ENCODE measurements at regions of chr7 and their contacts with region 1.

Region 1: DNA sequence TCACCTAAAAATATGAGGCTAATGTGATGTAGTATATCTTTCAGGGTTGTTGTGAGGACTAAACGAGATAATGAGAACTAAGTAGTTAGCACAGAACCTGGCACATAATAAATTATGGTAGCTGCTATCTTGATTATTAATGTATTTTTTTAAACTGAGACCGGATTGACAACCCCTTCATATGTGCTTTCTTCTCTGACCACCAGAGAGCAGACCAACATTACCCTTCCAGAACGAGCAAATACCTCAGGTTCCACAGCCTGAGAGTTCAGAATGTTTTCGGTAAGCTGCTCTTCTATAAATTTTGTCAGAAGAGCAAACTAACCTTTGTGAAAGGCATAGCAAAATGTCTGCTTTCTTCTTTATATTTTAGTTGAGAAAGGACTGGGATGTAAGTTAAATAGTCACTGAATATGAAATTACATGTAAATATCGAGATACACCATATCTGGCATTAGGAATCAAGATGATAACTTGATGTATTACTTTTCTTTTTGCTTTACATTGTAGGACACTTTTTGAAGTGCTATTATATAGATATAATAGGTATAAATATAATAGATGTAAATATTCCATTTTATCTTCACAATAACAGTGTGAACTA is 13.6 kb upstream of the BPGM start:
- DNase-seq: peak; percentile 44
- H3K4me3 Mint-ChIP-seq: no peak overlapping the region
- H3K27ac Mint-ChIP-seq: no peak overlapping the region
- H3K4me1 Mint-ChIP-seq: peaks cover 29% of the 10 kb centered on the region
- H3K27me3 Mint-ChIP-seq: peaks cover 10% of the 10 kb centered on the region

Region 2: DNA sequence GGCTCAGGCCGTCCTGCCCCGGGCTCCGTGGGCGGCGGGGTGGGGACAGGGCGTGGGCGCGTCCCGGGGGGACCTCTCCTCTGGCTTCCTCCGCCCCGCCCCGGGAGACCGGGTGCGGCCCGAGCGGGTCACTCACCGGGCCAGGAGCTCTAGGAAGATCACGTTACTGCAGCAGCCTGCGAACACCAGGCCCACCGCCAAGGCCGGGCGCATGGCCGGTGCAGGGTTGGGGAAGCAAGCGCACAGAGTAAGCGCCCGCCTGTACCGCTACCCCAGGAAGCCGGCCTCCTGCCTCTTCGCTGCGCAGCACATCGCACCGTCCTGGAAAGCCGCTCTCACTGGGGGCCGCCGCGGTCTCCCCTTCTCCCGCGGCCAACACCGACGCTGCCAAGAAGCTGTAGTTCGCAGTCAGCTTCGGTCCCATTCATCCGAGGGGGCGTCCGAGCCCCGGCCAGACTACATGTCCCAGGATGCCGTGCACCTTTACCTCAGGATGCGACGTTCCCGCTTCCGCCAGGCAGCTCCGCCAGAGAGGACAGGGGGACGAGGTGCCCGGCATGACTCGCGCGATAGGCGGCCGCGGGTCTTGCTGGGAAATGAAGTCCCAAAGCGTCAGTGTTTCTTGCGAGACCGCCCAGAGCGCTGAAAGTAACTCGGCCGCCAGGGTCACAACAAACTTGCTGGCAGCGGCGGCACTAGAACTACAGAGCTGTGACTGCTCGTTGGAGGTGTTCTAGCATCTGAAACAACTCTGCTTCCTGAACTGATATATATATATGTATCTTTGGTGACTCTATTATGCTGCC is 316.3 kb before region 1 on chr7 and contains the start of gene SLC35B4:
- CTCF ChIA-PET with region 1: no interaction called
- DNase-seq: peak; percentile 98
- H3K4me3 Mint-ChIP-seq: peak within 1 kb of the TSS; percentile 89
- H3K27ac Mint-ChIP-seq: peak within 1 kb of the TSS; percentile 85
- H3K4me1 Mint-ChIP-seq: peaks cover 19% of the 10 kb centered on the region
- H3K27me3 Mint-ChIP-seq: peaks cover 6% of the 10 kb centered on the region

Region 3: GRCh38 chr7:134548877-134549276 is 84.2 kb before region 1 on chr7 and contains the start of gene AKR1B15:
- CTCF ChIA-PET with region 1: no interaction called
- DNase-seq: no peak
- H3K4me3 Mint-ChIP-seq: no peak within 1 kb of the TSS
- H3K27ac Mint-ChIP-seq: no peak within 1 kb of the TSS
- H3K4me1 Mint-ChIP-seq: peaks cover 5% of the 10 kb centered on the region
- H3K27me3 Mint-ChIP-seq: peaks cover 17% of the 10 kb centered on the region

Region 4: DNA sequence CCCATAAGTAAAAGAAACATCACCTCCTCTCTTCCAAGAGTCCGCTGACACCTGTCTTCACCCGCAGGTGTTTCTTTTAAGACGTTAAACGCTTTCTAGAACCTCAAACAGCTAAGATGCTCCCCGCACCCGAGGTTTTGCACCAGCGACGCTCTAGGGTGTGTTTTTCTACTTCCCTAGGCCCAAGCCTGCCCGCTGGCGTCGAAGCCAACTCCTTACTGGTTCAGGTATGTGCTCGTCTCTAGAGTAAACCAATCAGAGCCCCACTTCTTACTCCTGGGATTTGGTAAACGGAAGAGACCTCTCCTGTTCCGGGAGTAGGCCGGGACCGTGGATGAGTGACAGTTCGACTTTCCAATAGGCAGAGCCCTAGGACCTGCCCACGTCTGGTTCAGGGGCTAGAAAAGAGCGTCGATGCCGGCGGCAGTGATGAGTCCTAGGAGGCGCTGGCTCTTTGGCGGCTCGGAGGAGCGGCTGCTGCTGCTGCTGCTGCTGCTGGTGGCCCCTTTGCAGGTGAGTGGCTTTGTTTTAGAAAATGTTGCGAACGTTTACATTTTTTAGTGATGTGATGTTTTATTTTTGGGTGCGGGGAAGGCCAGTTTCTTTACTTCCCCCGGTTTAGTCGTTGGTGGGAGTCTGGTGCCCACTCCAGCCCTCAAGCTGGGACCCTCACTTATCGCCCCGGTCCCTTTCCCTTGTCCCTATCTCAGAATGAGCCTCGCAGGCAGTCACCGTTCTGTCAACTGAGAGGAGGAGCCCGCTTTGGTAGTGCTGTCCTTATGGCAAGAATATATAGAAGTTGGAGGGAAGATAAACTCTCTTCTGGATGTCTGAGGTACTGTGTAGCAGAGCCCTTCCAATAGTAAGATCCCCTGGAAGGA is 13.6 kb after region 1 on chr7 and contains the start of gene BPGM:
- CTCF ChIA-PET with region 1: interaction called, 31 read pairs
- DNase-seq: peak; percentile 98
- H3K4me3 Mint-ChIP-seq: no peak within 1 kb of the TSS
- H3K27ac Mint-ChIP-seq: no peak within 1 kb of the TSS
- H3K4me1 Mint-ChIP-seq: peaks cover 35% of the 10 kb centered on the region
- H3K27me3 Mint-ChIP-seq: no peaks in the 10 kb centered on the region

Region 5: DNA sequence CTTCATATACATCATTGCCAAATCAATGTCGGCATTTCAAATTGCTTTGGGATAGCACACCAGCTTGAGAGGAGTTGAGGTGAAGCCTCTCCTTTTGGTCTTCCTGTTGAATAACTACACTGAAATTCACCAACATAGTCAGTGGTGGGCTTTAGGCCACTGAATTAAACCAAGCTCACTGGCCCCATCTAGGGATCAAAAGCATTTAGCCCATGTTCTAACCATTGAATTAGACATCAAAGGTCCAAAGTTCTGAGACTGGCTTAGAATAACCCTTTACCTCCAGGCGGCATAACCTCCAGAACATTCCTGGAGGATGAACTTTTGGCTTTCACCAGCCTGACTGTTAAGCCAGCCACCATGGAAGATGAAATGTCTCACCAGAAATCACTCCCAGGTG is 68.2 kb after region 1 on chr7:
- CTCF ChIA-PET with region 1: interaction called, 31 read pairs
- DNase-seq: no peak
- H3K4me3 Mint-ChIP-seq: no peak overlapping the region
- H3K27ac Mint-ChIP-seq: no peak overlapping the region
- H3K4me1 Mint-ChIP-seq: no peaks in the 10 kb centered on the region
- H3K27me3 Mint-ChIP-seq: peaks cover 7% of the 10 kb centered on the region

Region 6: DNA sequence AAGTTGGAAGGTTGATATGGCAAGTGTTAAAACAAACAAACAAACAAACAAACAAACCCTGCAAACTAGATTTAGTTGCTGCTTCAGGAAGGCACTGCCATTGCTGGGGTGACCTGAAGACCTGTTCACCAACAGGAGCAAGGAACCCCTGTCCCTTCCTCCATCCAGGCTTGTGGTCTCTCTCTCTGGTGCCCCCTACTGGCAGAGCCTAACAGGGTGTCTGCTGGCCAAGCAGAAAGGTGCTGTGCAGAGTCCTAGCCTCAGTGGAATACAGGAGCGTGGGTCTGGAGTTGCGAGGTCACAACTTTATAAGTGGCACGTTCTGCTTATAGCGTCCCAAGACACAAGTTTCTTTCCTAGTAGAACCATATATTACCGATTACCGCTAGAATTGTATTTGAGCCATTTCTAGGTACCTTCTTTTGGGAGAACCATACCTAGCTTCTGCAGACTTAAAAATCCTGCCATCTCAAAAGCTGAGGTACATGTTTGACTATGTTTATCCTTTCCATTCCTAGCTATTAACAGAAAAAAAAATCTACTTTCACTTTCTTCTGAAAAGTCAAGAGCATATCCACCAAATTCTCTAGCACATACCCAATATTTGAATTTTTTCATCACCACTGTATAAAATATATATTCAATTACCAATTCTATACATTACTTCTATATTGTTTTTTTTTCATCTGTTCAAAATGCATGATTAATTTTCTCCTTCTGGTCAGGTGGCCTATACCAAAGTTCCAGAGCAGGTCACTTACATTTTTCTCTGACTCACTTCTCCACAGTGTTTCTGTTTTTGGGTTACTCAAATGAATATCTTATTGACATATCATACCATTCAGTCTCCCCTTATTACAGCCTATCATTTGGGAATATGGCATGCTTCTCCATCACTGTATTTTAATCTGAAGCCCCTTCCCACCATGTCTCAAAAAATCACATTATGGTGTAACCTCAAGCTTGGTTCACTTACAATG is 117.3 kb after region 1 on chr7:
- CTCF ChIA-PET with region 1: interaction called, 32 read pairs
- DNase-seq: peak; percentile 76
- H3K4me3 Mint-ChIP-seq: no peak overlapping the region
- H3K27ac Mint-ChIP-seq: no peak overlapping the region
- H3K4me1 Mint-ChIP-seq: no peaks in the 10 kb centered on the region
- H3K27me3 Mint-ChIP-seq: no peaks in the 10 kb centered on the region

Region 7: DNA sequence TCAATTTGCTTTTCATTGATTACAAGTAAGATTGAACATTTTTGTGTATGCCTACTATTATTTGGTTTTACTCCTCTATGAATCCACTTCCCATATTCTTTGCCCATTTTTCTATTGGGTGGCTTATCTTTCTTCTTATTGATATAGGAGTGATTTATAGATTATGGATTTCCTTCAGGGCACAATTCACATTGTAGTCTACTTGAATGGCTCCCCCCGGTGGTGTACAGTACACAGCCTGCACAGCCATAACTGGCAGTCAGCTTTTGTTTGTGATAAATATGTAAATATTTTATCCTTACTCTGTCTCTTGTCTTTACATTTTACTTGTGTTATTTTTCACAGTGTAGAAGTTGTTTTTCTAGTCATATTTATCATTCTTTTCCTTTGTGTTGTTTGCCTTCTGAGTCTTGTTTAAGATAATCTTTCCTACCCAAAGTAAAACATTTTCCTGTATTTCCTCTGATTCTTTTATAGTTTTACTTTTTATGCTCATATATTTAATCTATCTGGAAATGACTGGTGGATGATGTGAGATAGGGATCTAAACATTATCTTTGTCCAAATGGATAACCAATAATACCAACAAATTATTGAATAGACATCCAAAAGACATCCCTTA is 122.5 kb after region 1 on chr7:
- CTCF ChIA-PET with region 1: interaction called, 32 read pairs
- DNase-seq: peak; percentile 66
- H3K4me3 Mint-ChIP-seq: no peak overlapping the region
- H3K27ac Mint-ChIP-seq: no peak overlapping the region
- H3K4me1 Mint-ChIP-seq: peaks cover 3% of the 10 kb centered on the region
- H3K27me3 Mint-ChIP-seq: no peaks in the 10 kb centered on the region

Region 8: GRCh38 chr7:134943764-134944400 is 310.8 kb after region 1 on chr7:
- CTCF ChIA-PET with region 1: interaction called, 21 read pairs
- DNase-seq: no peak
- H3K4me3 Mint-ChIP-seq: no peak overlapping the region
- H3K27ac Mint-ChIP-seq: no peak overlapping the region
- H3K4me1 Mint-ChIP-seq: peaks cover 17% of the 10 kb centered on the region
- H3K27me3 Mint-ChIP-seq: peaks cover 4% of the 10 kb centered on the region

Measured in activated naive CD4-positive, alpha-beta T cell treated with anti-CD3 and anti-CD28 coated beads, Interleukin-2, amount 10 ng/mL, durations not matched to agents 7 days and 5 days (primary cell).